ENCODE measurements at regions of chr9 and their contacts with region 1.

Region 1: GRCh38 chr9:35042081-35042604 is 30.3 kb downstream of the VCP start:
- DNase-seq: peak in 1 of 4 experiments; percentile 23
- ATAC-seq: peak; percentile 72
- H3K4me3 ChIP-seq: no peak overlapping the region
- H3K27ac ChIP-seq: no peak overlapping the region
- H3K4me1 ChIP-seq: peaks cover 3 to 8% of the 10 kb centered on the region in 2 experiments; a peak in 3 of 5 replicates
- H3K27me3 ChIP-seq: no peaks in the 10 kb centered on the region
- CTCF ChIP-seq: no peak
- EP300 ChIP-seq: no peak
- POLR2A ChIP-seq: no peak
- RAD21 ChIP-seq: no peak

Region 2: GRCh38 chr9:35056571-35057270 is 14.6 kb after region 1 on chr9:
- CTCF ChIA-PET with region 1: interaction called, 3 read pairs
- POLR2A ChIA-PET with region 1: interaction called, 14 read pairs
- in situ Hi-C with region 1: no loop called
- intact Hi-C with region 1: no loop called
- DNase-seq: no peak
- ATAC-seq: no peak
- H3K4me3 ChIP-seq: no peak overlapping the region
- H3K27ac ChIP-seq: no peak overlapping the region
- H3K4me1 ChIP-seq: no peaks in the 10 kb centered on the region
- H3K27me3 ChIP-seq: no peaks in the 10 kb centered on the region
- CTCF ChIP-seq: no peak
- EP300 ChIP-seq: no peak
- POLR2A ChIP-seq: no peak
- RAD21 ChIP-seq: no peak

Measured in K562 (cell line).